ENCODE measurements at regions of chr1 and their contacts with region 1.

Region 1: GRCh38 chr1:110060034-110060661 is 10.3 kb downstream of the ALX3 start:
- DNase-seq: peak; percentile 81
- H3K4me3 Mint-ChIP-seq: no peak overlapping the region
- H3K27ac Mint-ChIP-seq: no peak overlapping the region
- H3K4me1 Mint-ChIP-seq: no peaks in the 10 kb centered on the region
- H3K27me3 Mint-ChIP-seq: peaks cover 13% of the 10 kb centered on the region

Region 2: DNA sequence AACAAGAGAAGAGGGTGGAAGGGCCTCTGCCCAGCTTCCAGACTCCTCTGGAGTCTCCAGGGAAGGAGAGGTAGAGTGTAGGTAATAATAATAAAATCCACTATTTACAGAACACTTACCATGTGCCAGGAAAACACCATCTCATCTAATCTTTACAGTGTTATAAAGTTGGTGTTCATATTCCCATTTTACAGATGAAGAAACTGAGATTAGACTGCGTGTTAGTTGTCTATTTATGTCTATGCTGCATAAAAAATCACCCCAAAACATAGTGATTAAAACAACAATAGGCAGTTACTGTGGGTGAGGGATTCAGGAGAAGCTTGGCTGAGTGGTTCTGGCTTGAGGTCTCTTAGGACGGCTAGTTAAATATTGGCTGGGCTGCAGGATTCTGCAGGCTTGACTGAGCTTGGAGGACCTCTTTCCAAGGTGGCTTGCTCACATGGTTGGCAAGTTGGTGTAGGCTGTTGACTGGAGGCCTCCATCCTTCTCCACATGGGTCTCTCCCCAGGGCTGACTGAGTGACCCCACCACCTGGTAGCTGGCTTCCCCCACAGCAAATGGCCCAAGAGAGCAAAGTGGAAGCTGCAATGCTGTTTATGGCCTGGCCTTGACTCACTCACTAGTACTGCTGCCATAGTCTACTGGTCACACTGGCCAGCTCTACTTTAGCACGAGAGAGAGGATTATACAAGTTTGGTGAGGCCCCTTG is 16.8 kb after region 1 on chr1:
- CTCF ChIA-PET with region 1: interaction called, 18 read pairs
- DNase-seq: no peak
- H3K4me3 Mint-ChIP-seq: no peak overlapping the region
- H3K27ac Mint-ChIP-seq: no peak overlapping the region
- H3K4me1 Mint-ChIP-seq: no peaks in the 10 kb centered on the region
- H3K27me3 Mint-ChIP-seq: peaks cover 85% of the 10 kb centered on the region

Region 3: GRCh38 chr1:110106013-110106941 is 46.1 kb after region 1 on chr1:
- CTCF ChIA-PET with region 1: interaction called, 12 read pairs
- DNase-seq: peak; percentile 73
- H3K4me3 Mint-ChIP-seq: no peak overlapping the region
- H3K27ac Mint-ChIP-seq: no peak overlapping the region
- H3K4me1 Mint-ChIP-seq: no peaks in the 10 kb centered on the region
- H3K27me3 Mint-ChIP-seq: peaks cover 39% of the 10 kb centered on the region